ENCODE measurements at regions of chr20 and their contacts with region 1.

Region 1: DNA sequence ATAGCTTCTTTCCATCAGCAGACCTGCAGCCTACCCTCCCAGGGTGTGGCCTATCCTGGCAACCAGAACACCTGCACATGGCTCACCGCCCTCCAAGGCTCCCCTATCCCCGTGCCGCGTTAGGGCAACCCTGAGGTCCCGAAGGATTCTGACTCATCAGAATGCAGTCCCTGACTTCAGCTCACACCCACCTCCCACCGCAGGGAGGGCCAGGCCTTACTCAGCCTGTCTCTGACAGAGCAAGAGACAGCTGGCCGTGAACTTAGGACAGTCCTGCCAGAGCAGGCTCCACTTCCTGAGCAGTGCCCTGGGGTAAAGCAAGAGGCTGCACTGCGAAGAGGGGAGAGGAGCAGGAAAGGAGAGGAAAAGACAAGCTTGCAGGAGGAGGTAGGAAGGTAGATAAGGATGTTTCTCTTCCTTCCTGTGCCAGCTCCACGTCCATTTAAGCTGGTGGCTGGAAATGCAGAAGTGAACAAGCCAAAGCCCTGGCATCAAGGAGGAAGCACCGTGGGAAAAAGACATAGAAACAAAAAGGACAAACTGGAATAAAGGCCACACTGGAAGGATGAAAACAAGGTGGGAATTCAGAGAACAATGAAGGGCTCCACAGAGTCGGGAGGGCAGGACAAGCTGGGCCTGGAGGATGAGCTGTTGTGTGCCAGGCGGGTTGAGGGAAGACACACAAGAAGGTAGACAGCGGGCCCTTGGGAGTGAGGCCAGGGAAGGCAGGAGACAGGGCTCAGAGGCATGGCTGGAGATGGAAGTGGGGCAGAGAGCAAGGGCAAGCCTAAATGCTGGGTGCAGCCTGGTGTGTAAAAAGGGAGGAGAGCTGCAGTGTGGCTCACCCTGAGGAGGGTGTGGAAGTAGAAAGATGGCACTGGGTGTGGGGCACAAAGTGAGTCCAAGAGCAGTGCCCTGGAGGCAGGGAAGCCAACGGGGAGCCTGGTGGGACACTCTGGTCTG is 102.7 kb downstream of the SLC23A2 start:
- DNase-seq: no peak
- H3K4me3 ChIP-seq: no peak overlapping the region
- H3K27ac ChIP-seq: no peak overlapping the region
- H3K4me1 ChIP-seq: no peaks in the 10 kb centered on the region
- H3K27me3 ChIP-seq: no peaks in the 10 kb centered on the region
- CTCF ChIP-seq: no peak

Region 2: DNA sequence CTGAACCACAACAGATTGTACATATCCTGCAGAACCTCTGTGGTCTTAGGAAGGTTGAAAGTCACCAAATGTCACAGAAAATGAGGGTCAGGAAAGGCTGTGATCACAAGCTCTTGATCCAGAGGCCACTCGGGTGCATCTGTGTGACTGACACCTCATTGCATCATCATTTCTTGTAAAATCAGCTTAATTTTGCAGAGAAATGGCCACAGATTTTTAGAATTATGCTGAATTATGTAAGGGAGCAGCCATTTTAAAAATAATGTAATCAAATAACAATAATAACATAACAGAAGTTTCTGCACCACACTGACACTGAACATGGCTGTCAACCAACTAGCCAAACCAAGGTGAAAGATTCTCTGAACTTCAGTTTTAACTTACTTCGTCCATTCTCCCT is 209.3 kb before region 1 on chr20:
- CTCF ChIA-PET with region 1: no interaction called
- POLR2A ChIA-PET with region 1: interaction called, 11 read pairs
- intact Hi-C with region 1: no loop called
- DNase-seq: no peak
- H3K4me3 ChIP-seq: no peak overlapping the region
- H3K27ac ChIP-seq: peak overlapping the region; percentile 56
- H3K4me1 ChIP-seq: peaks cover 37% of the 10 kb centered on the region
- H3K27me3 ChIP-seq: no peaks in the 10 kb centered on the region
- CTCF ChIP-seq: no peak

Region 3: GRCh38 chr20:4720041-4720976 is 178.3 kb before region 1 on chr20:
- CTCF ChIA-PET with region 1: no interaction called
- POLR2A ChIA-PET with region 1: no interaction called
- intact Hi-C with region 1: no loop called
- DNase-seq: peak; percentile 88
- H3K4me3 ChIP-seq: no peak overlapping the region
- H3K27ac ChIP-seq: peak overlapping the region; percentile 58
- H3K4me1 ChIP-seq: peaks cover 6% of the 10 kb centered on the region
- H3K27me3 ChIP-seq: no peaks in the 10 kb centered on the region
- CTCF ChIP-seq: peak; percentile 82